Activated T-helper 1 cell treated with anti-CD3 and anti-CD28 coated beads, Interleukin-12 subunit alpha, Interleukin-12 subunit beta, Interleukin-2, Interleukin-4 antibody, amounts not matched to agents 30 ng/mL and 10 ng/mL and 1 ng/mL, durations not matched to agents 14 hours and 24 hours and 36 hours (primary cell): ENCODE measurements at regions of chr14 and their contacts with region 1.

Region 1: GRCh38 chr14:54669721-54670561 is 103.0 kb downstream of the SAMD4A start:
- DNase-seq: peak; percentile 5
- H3K4me3 Mint-ChIP-seq: no peak overlapping the region
- H3K27ac Mint-ChIP-seq: peak overlapping the region; percentile 11
- H3K4me1 Mint-ChIP-seq: peaks cover 40% of the 10 kb centered on the region
- H3K27me3 Mint-ChIP-seq: peaks cover 59% of the 10 kb centered on the region

Region 2: GRCh38 chr14:54116972-54117371 is 553.0 kb before region 1 on chr14:
- intact Hi-C with region 1: no loop called
- DNase-seq: no peak
- H3K4me3 Mint-ChIP-seq: no peak overlapping the region
- H3K27ac Mint-ChIP-seq: no peak overlapping the region
- H3K4me1 Mint-ChIP-seq: no peaks in the 10 kb centered on the region
- H3K27me3 Mint-ChIP-seq: no peaks in the 10 kb centered on the region

Region 3: GRCh38 chr14:54627540-54628363 is 42.2 kb before region 1 on chr14:
- intact Hi-C with region 1: loop called (anchors 5 kb)
- DNase-seq: peak; percentile 36
- H3K4me3 Mint-ChIP-seq: peak overlapping the region; percentile 62
- H3K27ac Mint-ChIP-seq: peak overlapping the region; percentile 49
- H3K4me1 Mint-ChIP-seq: peaks cover 36% of the 10 kb centered on the region
- H3K27me3 Mint-ChIP-seq: no peaks in the 10 kb centered on the region

Region 4: GRCh38 chr14:54686219-54686870 is 16.4 kb after region 1 on chr14:
- intact Hi-C with region 1: loop called (anchors 1 kb)
- DNase-seq: no peak
- H3K4me3 Mint-ChIP-seq: no peak overlapping the region
- H3K27ac Mint-ChIP-seq: no peak overlapping the region
- H3K4me1 Mint-ChIP-seq: peaks cover 17% of the 10 kb centered on the region
- H3K27me3 Mint-ChIP-seq: peaks cover 26% of the 10 kb centered on the region

Region 5: DNA sequence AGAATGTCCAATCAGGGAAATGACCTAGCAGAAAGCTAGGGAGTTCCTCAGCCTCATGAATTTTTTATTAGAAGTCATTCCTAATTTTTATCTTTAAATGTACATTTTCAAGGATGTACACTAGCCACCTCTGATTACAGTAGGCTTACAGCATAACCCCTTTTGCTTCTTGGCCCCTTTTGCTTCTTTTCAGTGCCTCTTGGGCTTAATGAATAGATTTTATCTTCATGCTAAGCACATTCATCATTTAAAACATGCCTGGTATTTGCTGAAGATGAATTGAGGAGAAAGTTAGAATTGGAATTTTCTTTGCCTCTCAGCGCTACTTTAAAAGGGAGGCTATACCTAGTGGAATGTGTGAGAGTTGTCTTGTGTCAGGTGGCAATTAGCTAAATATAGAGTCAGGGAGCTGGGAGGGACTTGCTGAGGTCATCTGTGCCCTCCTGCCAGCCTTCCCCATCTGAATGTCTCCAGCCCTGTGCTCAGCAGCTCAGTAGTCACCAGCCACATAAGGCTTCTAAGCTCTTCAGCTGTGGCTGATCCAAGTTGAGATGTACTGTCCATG is 29.1 kb after region 1 on chr14:
- intact Hi-C with region 1: no loop called
- DNase-seq: no peak
- H3K4me3 Mint-ChIP-seq: no peak overlapping the region
- H3K27ac Mint-ChIP-seq: no peak overlapping the region
- H3K4me1 Mint-ChIP-seq: peaks cover 8% of the 10 kb centered on the region
- H3K27me3 Mint-ChIP-seq: peaks cover 37% of the 10 kb centered on the region